Naive thymus-derived CD4-positive, alpha-beta T cell (primary cell): ENCODE measurements at regions of chr1 and their contacts with region 1.

Region 1: DNA sequence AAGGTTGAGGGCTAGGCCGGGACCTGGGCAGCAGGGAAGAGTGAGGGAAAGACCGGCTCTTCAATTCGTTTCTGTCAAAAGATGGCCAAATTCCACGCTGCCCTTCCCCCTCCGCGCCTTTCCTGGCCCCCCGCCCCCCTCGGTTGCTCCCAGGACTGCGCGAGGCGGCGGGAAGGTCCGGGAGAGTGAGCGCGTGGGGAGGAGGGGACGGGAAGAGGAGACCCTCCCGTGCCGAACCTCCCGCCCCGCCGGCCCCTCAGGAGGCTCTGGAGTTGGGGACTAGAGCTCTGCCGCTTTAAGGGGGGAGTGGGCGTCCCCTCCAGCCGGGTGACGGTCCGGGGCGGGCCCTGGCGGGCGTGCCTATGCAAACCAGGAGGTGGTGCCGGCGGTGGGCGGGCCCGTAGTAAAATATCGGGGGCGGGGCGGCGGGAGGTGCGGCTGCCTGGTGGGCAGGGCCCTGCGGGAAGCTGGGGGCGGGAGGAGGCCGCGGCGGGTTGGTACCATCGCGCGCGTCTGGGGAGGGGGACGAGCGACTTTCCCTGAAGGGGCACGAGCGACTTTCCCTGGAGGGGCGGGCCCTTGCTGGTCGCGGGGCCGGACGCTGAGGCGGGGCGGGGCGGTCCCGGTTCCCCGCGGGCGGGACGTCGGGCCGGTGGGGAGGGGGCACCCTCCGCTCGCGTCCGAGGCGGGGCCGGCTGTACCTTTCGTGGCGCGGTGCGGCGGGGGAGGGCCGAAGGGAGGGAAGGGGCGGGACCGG is 58.2 kb downstream of the BCL9 start:
- DNase-seq: peak; percentile 90 to 97 (median 96)
- ATAC-seq: peak; percentile 90
- H3K4me3 ChIP-seq: peak overlapping the region; percentile 72
- H3K4me3 Mint-ChIP-seq: peak overlapping the region; percentile 82 to 96 (median 90)
- H3K27ac ChIP-seq: peak overlapping the region; percentile 73
- H3K27ac Mint-ChIP-seq: peak overlapping the region; percentile 55 to 94 (median 87)
- H3K4me1 ChIP-seq: peaks cover 8 to 15% of the 10 kb centered on the region in 2 donors
- H3K4me1 Mint-ChIP-seq: peaks cover 15 to 38% (median 35%) of the 10 kb centered on the region in 7 donors
- H3K27me3 ChIP-seq: no peaks in the 10 kb centered on the region
- H3K27me3 Mint-ChIP-seq: peaks cover 0 to 18% (median 0%) of the 10 kb centered on the region in 5 donors

Region 2: DNA sequence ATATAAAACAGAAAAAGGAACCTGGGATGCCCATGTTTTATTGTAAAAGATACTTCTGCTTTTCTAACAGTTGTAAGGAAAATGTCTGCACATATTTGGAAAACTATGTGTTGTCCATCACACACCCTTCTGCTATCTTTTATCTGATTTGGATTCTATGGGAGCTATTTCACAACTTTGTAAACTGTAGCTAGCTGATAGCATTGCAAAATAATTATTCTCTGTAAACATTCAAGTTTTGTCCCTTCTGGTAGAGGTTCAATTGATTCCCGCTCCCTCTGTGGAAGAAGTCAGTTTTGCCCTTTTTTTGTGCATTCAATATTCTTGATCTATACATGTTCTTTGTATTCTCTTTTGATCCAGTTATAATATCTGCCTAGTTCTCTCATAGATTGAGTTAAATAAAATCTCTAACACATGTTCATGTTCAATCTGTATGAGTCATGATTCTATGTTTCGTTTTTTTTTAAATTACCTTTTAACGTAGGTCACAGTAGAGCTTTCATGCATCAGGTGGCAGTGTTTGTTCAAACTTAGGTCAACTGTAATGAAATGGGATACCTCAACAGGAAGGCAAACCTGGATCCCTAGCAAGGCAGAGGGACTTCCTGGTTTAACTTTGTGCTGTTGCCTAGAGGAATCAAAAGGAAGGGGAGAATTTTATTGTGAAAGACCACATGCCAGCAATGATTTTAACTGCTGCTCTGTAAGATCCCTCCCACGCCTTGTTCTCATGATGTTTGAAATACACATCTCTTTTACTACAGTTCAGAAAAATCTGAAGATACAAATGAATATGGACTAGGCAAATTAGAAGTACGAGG is 84.3 kb before region 1 on chr1:
- CTCF ChIA-PET with region 1: interaction called, 6 read pairs
- POLR2A ChIA-PET with region 1: interaction called, 3 read pairs
- intact Hi-C with region 1: loop called in 1 of 2 experiments (anchors 1 kb)
- DNase-seq: peak in 6 of 9 donors; percentile 11 to 37 (median 24)
- ATAC-seq: peak; percentile 42
- H3K4me3 ChIP-seq: no peak overlapping the region
- H3K4me3 Mint-ChIP-seq: no peak overlapping the region
- H3K27ac ChIP-seq: no peak overlapping the region
- H3K27ac Mint-ChIP-seq: peak overlapping the region in 1 of 9 donors; percentile 6
- H3K4me1 ChIP-seq: no peaks in the 10 kb centered on the region
- H3K4me1 Mint-ChIP-seq: peaks cover 0 to 15% (median 6%) of the 10 kb centered on the region in 7 donors
- H3K27me3 ChIP-seq: no peaks in the 10 kb centered on the region
- H3K27me3 Mint-ChIP-seq: peaks cover 0 to 19% (median 3%) of the 10 kb centered on the region in 5 donors

Region 3: GRCh38 chr1:147579532-147579931 is 20.0 kb before region 1 on chr1:
- CTCF ChIA-PET with region 1: no interaction called
- POLR2A ChIA-PET with region 1: interaction called, 3 read pairs
- intact Hi-C with region 1: loop called in 1 of 2 experiments (anchors 1 kb)
- DNase-seq: no peak
- ATAC-seq: no peak
- H3K4me3 ChIP-seq: no peak overlapping the region
- H3K4me3 Mint-ChIP-seq: peak overlapping the region in 9 of 10 donors; percentile 50 to 73 (median 60)
- H3K27ac ChIP-seq: no peak overlapping the region
- H3K27ac Mint-ChIP-seq: peak overlapping the region in 4 of 9 donors; percentile 4 to 39 (median 23)
- H3K4me1 ChIP-seq: peaks cover 13 to 17% of the 10 kb centered on the region in 2 donors
- H3K4me1 Mint-ChIP-seq: peaks cover 17 to 39% (median 30%) of the 10 kb centered on the region in 7 donors
- H3K27me3 ChIP-seq: peaks cover 0 to 5% of the 10 kb centered on the region in 2 donors
- H3K27me3 Mint-ChIP-seq: peaks cover 0 to 50% (median 39%) of the 10 kb centered on the region in 5 donors

Region 4: DNA sequence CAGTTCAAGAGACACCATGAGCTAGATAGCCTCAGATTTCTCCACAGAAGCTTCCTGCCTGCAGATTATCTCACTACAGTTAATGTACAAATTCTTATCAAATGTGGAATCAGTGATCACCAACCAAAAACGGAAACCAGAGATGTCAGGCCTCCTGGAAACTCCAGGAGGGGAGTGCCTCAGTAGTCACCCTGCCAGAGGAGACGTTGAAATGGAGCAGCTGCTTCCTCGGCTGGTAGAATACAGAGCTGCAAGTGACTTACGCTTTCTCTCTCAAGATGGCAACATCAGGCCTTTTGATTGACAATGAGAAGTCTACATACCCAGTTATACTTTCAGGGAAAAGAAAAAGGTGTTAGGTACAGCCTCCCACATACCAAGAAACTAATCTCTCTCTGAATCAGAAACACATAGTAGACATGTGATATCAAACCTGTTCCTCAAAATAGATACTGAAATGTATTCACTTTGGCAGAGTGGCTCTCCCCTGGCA is 18.6 kb after region 1 on chr1:
- CTCF ChIA-PET with region 1: no interaction called
- POLR2A ChIA-PET with region 1: no interaction called
- intact Hi-C with region 1: loop called in 1 of 2 experiments (anchors 1 kb)
- DNase-seq: peak in 2 of 9 donors; percentile 3 to 48
- ATAC-seq: peak; percentile 69
- H3K4me3 ChIP-seq: no peak overlapping the region
- H3K4me3 Mint-ChIP-seq: peak overlapping the region in 1 of 10 donors; percentile 36
- H3K27ac ChIP-seq: no peak overlapping the region
- H3K27ac Mint-ChIP-seq: peak overlapping the region; percentile 10 to 83 (median 65)
- H3K4me1 ChIP-seq: peaks cover 0 to 8% of the 10 kb centered on the region in 2 donors
- H3K4me1 Mint-ChIP-seq: peaks cover 2 to 35% (median 20%) of the 10 kb centered on the region in 7 donors
- H3K27me3 ChIP-seq: no peaks in the 10 kb centered on the region
- H3K27me3 Mint-ChIP-seq: no peaks in the 10 kb centered on the region

Region 5: DNA sequence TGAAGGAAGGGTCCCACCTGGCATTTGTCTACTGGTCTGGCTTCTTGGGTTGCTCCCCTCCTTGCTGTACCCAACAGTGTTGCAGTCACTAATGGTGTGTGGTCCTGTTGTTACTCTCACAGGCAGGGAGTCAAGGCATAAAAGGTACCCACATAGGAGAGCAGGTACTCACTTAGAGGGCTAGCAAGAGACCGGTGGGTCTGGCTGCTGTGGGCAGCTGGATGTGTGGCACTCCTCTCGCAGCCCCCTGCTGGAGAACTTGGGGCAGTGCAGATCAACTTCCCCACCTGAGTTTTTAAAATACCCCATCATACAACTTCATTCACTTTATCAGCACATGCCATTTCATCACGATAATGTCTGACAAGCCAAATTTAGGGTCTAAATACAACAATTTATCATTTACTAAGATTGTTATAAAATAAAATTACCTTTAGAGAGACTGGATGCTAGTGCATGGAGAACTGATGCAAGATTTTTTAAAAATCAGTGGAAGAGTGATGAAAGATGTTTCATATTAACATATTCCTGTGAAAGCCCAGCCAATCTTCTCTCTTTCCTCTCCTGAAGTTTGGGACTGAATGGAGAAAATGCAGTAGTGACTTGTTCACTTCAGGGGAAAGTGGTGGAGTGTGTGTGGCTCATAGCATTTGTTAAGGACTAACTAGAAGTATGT is 28.0 kb after region 1 on chr1:
- CTCF ChIA-PET with region 1: interaction called, 5 read pairs
- POLR2A ChIA-PET with region 1: no interaction called
- intact Hi-C with region 1: loop called (anchors 1 kb)
- DNase-seq: peak; percentile 24 to 63 (median 44)
- ATAC-seq: peak; percentile 79
- H3K4me3 ChIP-seq: no peak overlapping the region
- H3K4me3 Mint-ChIP-seq: peak overlapping the region in 1 of 10 donors; percentile 20
- H3K27ac ChIP-seq: no peak overlapping the region
- H3K27ac Mint-ChIP-seq: no peak overlapping the region
- H3K4me1 ChIP-seq: peaks cover 0 to 34% of the 10 kb centered on the region in 2 donors
- H3K4me1 Mint-ChIP-seq: peaks cover 23 to 42% (median 35%) of the 10 kb centered on the region in 7 donors
- H3K27me3 ChIP-seq: no peaks in the 10 kb centered on the region
- H3K27me3 Mint-ChIP-seq: no peaks in the 10 kb centered on the region

Region 6: GRCh38 chr1:147670317-147671041 is 70.9 kb after region 1 on chr1 and contains the start of gene ACP6:
- CTCF ChIA-PET with region 1: no interaction called
- POLR2A ChIA-PET with region 1: no interaction called
- intact Hi-C with region 1: loop called (anchors 1 kb)
- DNase-seq: peak; percentile 61 to 86 (median 82)
- ATAC-seq: peak; percentile 98
- H3K4me3 ChIP-seq: peak within 1 kb of the TSS; percentile 78
- H3K4me3 Mint-ChIP-seq: peak within 1 kb of the TSS; percentile 93 to 98 (median 97)
- H3K27ac ChIP-seq: peak within 1 kb of the TSS; percentile 69
- H3K27ac Mint-ChIP-seq: peak within 1 kb of the TSS; percentile 83 to 94 (median 89)
- H3K4me1 ChIP-seq: peaks cover 0 to 7% of the 10 kb centered on the region in 2 donors
- H3K4me1 Mint-ChIP-seq: peaks cover 15 to 38% (median 29%) of the 10 kb centered on the region in 7 donors
- H3K27me3 ChIP-seq: no peaks in the 10 kb centered on the region
- H3K27me3 Mint-ChIP-seq: peaks cover 0 to 27% (median 12%) of the 10 kb centered on the region in 5 donors
- total RNA-seq, gene ACP6: 10.3 to 22.4 (median 16.6) TPM